B cell (primary cell): ENCODE measurements at regions of chr19 and their contacts with region 1.

Region 1: GRCh38 chr19:46542428-46543230 is 47.0 kb upstream of the PNMA8B start:
- DNase-seq: peak; percentile 82
- ATAC-seq: peak; percentile 39
- H3K4me3 ChIP-seq: no peak overlapping the region
- H3K4me3 Mint-ChIP-seq: no peak overlapping the region
- H3K27ac ChIP-seq: no peak overlapping the region
- H3K27ac Mint-ChIP-seq: no peak overlapping the region
- H3K4me1 ChIP-seq: peaks cover 0 to 4% of the 10 kb centered on the region in 2 donors
- H3K4me1 Mint-ChIP-seq: peaks cover 4% of the 10 kb centered on the region
- H3K27me3 ChIP-seq: peaks cover 0 to 4% (median 0%) of the 10 kb centered on the region in 4 experiments
- H3K27me3 Mint-ChIP-seq: peaks cover 3% of the 10 kb centered on the region
- CTCF ChIP-seq: peak; percentile 98

Region 2: DNA sequence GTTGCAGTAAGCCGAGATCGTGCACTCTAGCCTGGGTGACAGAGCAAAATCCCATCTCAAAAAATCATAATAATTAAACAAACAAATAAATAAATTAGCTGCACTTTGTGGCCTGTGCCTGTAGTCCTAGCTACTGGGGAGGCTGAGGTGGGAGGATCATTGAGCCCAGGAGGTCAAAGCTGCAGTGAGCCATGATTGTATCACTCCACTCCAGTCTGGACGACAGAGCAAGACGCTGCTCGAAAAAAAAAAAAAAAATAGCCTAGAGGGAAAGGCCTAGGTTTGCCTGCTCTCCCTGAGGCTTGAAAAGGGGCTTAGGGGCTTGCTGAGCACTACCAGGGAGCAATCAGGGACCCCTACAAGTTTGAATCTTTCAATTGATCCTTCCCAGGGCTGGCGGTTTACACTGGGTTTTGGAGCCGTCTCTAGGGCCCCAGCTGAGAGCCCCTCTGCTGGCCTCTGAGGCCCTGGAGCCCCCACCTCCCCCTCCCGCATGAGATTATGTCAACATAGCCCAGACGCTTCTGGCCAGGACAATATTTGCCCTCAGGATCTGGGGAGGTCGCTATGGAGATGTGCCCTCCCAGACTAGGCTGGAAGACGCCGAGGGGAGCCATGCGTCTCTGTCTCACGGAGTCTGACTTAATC is 885.0 kb before region 1 on chr19:
- CTCF ChIA-PET with region 1: no interaction called
- POLR2A ChIA-PET with region 1: no interaction called
- intact Hi-C with region 1: no loop called
- DNase-seq: no peak
- ATAC-seq: no peak
- H3K4me3 ChIP-seq: no peak overlapping the region
- H3K4me3 Mint-ChIP-seq: no peak overlapping the region
- H3K27ac ChIP-seq: no peak overlapping the region
- H3K27ac Mint-ChIP-seq: no peak overlapping the region
- H3K4me1 ChIP-seq: no peaks in the 10 kb centered on the region
- H3K4me1 Mint-ChIP-seq: no peaks in the 10 kb centered on the region
- H3K27me3 ChIP-seq: peaks cover 0 to 10% (median 4%) of the 10 kb centered on the region in 4 experiments
- H3K27me3 Mint-ChIP-seq: peaks cover 17% of the 10 kb centered on the region
- CTCF ChIP-seq: no peak

Region 3: GRCh38 chr19:46493236-46494145 is 49.1 kb before region 1 on chr19:
- CTCF ChIA-PET with region 1: no interaction called
- POLR2A ChIA-PET with region 1: no interaction called
- intact Hi-C with region 1: no loop called
- DNase-seq: peak; percentile 50
- ATAC-seq: no peak
- H3K4me3 ChIP-seq: peak overlapping the region in 3 of 5 experiments; percentile 30 to 56 (median 50)
- H3K4me3 Mint-ChIP-seq: peak overlapping the region; percentile 70
- H3K27ac ChIP-seq: no peak overlapping the region
- H3K27ac Mint-ChIP-seq: no peak overlapping the region
- H3K4me1 ChIP-seq: peaks cover 38 to 59% of the 10 kb centered on the region in 2 donors
- H3K4me1 Mint-ChIP-seq: peaks cover 29% of the 10 kb centered on the region
- H3K27me3 ChIP-seq: peaks cover 0 to 77% (median 45%) of the 10 kb centered on the region in 4 experiments
- H3K27me3 Mint-ChIP-seq: peaks cover 52% of the 10 kb centered on the region
- CTCF ChIP-seq: no peak

Region 4: GRCh38 chr19:46529622-46530462 is 12.8 kb before region 1 on chr19:
- CTCF ChIA-PET with region 1: interaction called, 130 read pairs
- POLR2A ChIA-PET with region 1: no interaction called
- intact Hi-C with region 1: loop called (anchors 1 kb)
- DNase-seq: peak; percentile 81
- ATAC-seq: peak; percentile 67
- H3K4me3 ChIP-seq: no peak overlapping the region
- H3K4me3 Mint-ChIP-seq: no peak overlapping the region
- H3K27ac ChIP-seq: no peak overlapping the region
- H3K27ac Mint-ChIP-seq: no peak overlapping the region
- H3K4me1 ChIP-seq: peaks cover 0 to 10% of the 10 kb centered on the region in 2 donors
- H3K4me1 Mint-ChIP-seq: peaks cover 10% of the 10 kb centered on the region
- H3K27me3 ChIP-seq: peaks cover 0 to 15% (median 3%) of the 10 kb centered on the region in 4 experiments
- H3K27me3 Mint-ChIP-seq: peaks cover 8% of the 10 kb centered on the region
- CTCF ChIP-seq: peak; percentile 98

Region 5: GRCh38 chr19:46803555-46803954 is 260.9 kb after region 1 on chr19:
- CTCF ChIA-PET with region 1: no interaction called
- POLR2A ChIA-PET with region 1: interaction called, 10 read pairs
- intact Hi-C with region 1: no loop called
- DNase-seq: no peak
- ATAC-seq: no peak
- H3K4me3 ChIP-seq: no peak overlapping the region
- H3K4me3 Mint-ChIP-seq: no peak overlapping the region
- H3K27ac ChIP-seq: no peak overlapping the region
- H3K27ac Mint-ChIP-seq: no peak overlapping the region
- H3K4me1 ChIP-seq: no peaks in the 10 kb centered on the region
- H3K4me1 Mint-ChIP-seq: no peaks in the 10 kb centered on the region
- H3K27me3 ChIP-seq: no peaks in the 10 kb centered on the region
- H3K27me3 Mint-ChIP-seq: no peaks in the 10 kb centered on the region
- CTCF ChIP-seq: no peak